A673 (cell line): ENCODE measurements at regions of chr2 and their contacts with region 1.

Region 1: GRCh38 chr2:227655454-227655853 is 11.2 kb upstream of the SCYGR5 start:
- DNase-seq: peak; percentile 43
- H3K4me3 ChIP-seq: no peak overlapping the region
- H3K27ac ChIP-seq: no peak overlapping the region
- H3K4me1 ChIP-seq: no peaks in the 10 kb centered on the region
- H3K27me3 ChIP-seq: no peaks in the 10 kb centered on the region
- CTCF ChIP-seq: no peak

Region 2: GRCh38 chr2:227406177-227407031 is 249.1 kb before region 1 on chr2:
- CTCF ChIA-PET with region 1: no interaction called
- POLR2A ChIA-PET with region 1: no interaction called
- intact Hi-C with region 1: loop called (anchors 5 kb)
- DNase-seq: peak; percentile 99
- H3K4me3 ChIP-seq: no peak overlapping the region
- H3K27ac ChIP-seq: peak overlapping the region; percentile 95
- H3K4me1 ChIP-seq: peaks cover 30% of the 10 kb centered on the region
- H3K27me3 ChIP-seq: no peaks in the 10 kb centered on the region
- CTCF ChIP-seq: peak; percentile 89

Region 3: DNA sequence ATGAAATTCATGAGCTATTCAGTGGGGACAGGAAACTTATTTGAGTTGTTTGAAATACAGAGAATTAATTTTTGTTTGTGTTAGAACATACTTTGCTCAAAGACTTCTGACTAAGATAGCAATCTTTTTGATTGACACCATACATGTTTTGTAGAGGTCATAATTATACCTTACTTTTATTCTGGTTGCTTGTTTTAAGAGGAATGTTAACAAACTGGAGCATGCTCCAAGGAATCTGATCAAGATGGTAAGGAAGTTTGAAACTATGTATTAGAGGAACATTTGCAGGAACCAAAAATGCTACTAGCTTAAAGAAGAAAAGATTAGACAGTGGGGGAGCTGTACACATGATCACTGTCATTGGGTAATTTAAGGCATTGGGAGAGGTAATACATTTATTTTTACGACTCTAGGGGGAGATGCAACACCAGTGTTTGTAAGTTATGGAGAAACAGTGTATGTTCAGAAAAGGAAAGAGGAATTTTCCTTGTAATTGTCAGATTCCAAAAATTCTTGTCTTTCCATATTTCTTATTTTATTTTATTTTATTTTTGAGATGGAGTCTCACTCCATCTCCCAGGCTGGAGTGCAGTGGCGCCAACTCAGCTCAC is 175.5 kb before region 1 on chr2:
- CTCF ChIA-PET with region 1: no interaction called
- POLR2A ChIA-PET with region 1: no interaction called
- intact Hi-C with region 1: loop called (anchors 5 kb)
- DNase-seq: peak; percentile 81
- H3K4me3 ChIP-seq: no peak overlapping the region
- H3K27ac ChIP-seq: peak overlapping the region; percentile 12
- H3K4me1 ChIP-seq: peaks cover 43% of the 10 kb centered on the region
- H3K27me3 ChIP-seq: no peaks in the 10 kb centered on the region
- CTCF ChIP-seq: peak; percentile 60

Region 4: GRCh38 chr2:227696787-227697679 is 41.6 kb after region 1 on chr2:
- CTCF ChIA-PET with region 1: no interaction called
- POLR2A ChIA-PET with region 1: no interaction called
- intact Hi-C with region 1: no loop called
- DNase-seq: no peak
- H3K4me3 ChIP-seq: no peak overlapping the region
- H3K27ac ChIP-seq: no peak overlapping the region
- H3K4me1 ChIP-seq: no peaks in the 10 kb centered on the region
- H3K27me3 ChIP-seq: no peaks in the 10 kb centered on the region
- CTCF ChIP-seq: no peak

Region 5: GRCh38 chr2:227766373-227766883 is 111.0 kb after region 1 on chr2:
- CTCF ChIA-PET with region 1: interaction called, 17 read pairs
- POLR2A ChIA-PET with region 1: no interaction called
- intact Hi-C with region 1: loop called (anchors 2 kb)
- DNase-seq: peak; percentile 79
- H3K4me3 ChIP-seq: no peak overlapping the region
- H3K27ac ChIP-seq: no peak overlapping the region
- H3K4me1 ChIP-seq: peaks cover 9% of the 10 kb centered on the region
- H3K27me3 ChIP-seq: no peaks in the 10 kb centered on the region
- CTCF ChIP-seq: peak; percentile 92

Region 6: GRCh38 chr2:227862227-227862740 is 206.8 kb after region 1 on chr2:
- CTCF ChIA-PET with region 1: interaction called, 3 read pairs
- POLR2A ChIA-PET with region 1: no interaction called
- intact Hi-C with region 1: loop called (anchors 5 kb)
- DNase-seq: peak; percentile 67
- H3K4me3 ChIP-seq: no peak overlapping the region
- H3K27ac ChIP-seq: no peak overlapping the region
- H3K4me1 ChIP-seq: peaks cover 22% of the 10 kb centered on the region
- H3K27me3 ChIP-seq: no peaks in the 10 kb centered on the region
- CTCF ChIP-seq: peak; percentile 85

Region 7: DNA sequence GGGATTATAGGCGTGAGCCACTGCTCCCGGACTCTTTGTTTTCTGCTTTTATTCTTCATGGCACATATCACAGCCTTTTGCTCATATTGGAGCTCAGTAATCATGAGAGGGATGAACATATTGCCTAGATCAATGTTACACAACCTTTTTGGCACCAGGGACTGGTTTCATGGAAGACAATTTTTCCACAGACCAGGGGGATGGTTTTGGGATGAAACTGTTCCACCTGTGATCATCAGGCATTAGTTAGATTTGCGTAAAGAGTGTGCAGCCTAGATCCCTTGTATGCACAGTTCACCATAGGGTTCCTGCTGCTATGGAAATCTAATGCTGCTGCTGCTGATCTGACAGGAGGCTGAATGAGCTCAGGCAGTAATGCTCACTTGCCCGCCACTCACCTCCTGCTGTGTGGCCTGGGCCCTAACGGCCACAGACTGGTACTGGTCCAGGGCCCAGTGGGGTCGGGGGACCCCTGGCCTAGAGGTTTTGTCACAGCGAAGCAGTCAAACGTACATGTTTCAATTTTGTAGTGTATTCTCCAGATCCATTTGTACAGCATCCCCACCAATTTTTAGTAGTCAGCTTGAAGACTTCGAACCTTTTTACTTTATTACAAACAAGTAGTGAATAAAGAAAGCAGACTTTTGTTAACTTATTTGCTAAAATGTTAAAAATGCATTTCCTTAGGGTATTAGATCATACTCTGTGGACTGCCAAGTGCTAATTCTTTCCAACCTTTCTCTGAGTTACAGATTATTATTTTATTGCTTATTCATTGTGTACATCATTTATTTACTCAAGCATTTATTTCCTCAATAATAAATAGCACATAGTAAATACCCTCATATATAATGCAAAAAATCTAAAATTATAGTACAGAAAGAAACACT is 222.2 kb after region 1 on chr2:
- CTCF ChIA-PET with region 1: no interaction called
- POLR2A ChIA-PET with region 1: no interaction called
- intact Hi-C with region 1: loop called (anchors 1 kb)
- DNase-seq: no peak
- H3K4me3 ChIP-seq: no peak overlapping the region
- H3K27ac ChIP-seq: no peak overlapping the region
- H3K4me1 ChIP-seq: no peaks in the 10 kb centered on the region
- H3K27me3 ChIP-seq: no peaks in the 10 kb centered on the region
- CTCF ChIP-seq: no peak

Region 8: GRCh38 chr2:227884511-227884947 is 229.1 kb after region 1 on chr2:
- CTCF ChIA-PET with region 1: no interaction called
- POLR2A ChIA-PET with region 1: no interaction called
- intact Hi-C with region 1: loop called (anchors 2 kb)
- DNase-seq: peak; percentile 80
- H3K4me3 ChIP-seq: no peak overlapping the region
- H3K27ac ChIP-seq: no peak overlapping the region
- H3K4me1 ChIP-seq: peaks cover 6% of the 10 kb centered on the region
- H3K27me3 ChIP-seq: no peaks in the 10 kb centered on the region
- CTCF ChIP-seq: peak; percentile 92